Endothelial cell of umbilical vein (primary cell): ENCODE measurements at regions of chr14 and their contacts with region 1.

Region 1: GRCh38 chr14:67285876-67286452 is 44.7 kb downstream of the PALS1 start:
- DNase-seq: peak; percentile 39
- H3K4me3 ChIP-seq: no peak overlapping the region
- H3K27ac ChIP-seq: no peak overlapping the region
- H3K4me1 ChIP-seq: no peaks in the 10 kb centered on the region
- H3K27me3 ChIP-seq: no peaks in the 10 kb centered on the region
- CTCF ChIP-seq: peak; percentile 4 to 7
- POLR2A ChIP-seq: no peak

Region 2: DNA sequence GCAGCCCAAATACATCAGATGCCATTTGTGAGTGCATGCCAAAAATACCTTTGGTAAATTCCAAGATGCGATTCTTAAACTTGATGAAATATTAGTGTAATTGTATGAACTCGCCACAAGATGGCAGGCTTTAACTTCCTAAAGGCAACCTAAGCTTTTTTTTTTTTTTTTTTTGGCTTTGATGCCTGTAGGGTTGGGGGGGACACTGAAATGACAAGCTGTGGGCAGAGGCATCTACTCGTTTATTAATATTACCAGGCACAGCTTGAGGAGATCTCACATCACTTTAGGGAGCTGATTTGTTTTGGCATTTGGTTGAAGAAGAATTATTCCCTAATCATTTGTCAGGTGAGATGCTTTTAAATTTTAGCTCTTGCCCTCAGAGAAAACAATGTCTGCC is 926.5 kb before region 1 on chr14:
- CTCF ChIA-PET with region 1: interaction called, 18 read pairs
- POLR2A ChIA-PET with region 1: no interaction called
- dilution Hi-C with region 1: no loop called
- intact Hi-C with region 1: no loop called
- DNase-seq: peak; percentile 48
- H3K4me3 ChIP-seq: no peak overlapping the region
- H3K27ac ChIP-seq: no peak overlapping the region
- H3K4me1 ChIP-seq: no peaks in the 10 kb centered on the region
- H3K27me3 ChIP-seq: peaks cover 0 to 16% of the 10 kb centered on the region in 2 experiments
- CTCF ChIP-seq: peak; percentile 32 to 37
- POLR2A ChIP-seq: no peak

Region 3: GRCh38 chr14:67158566-67158965 is 127.4 kb before region 1 on chr14:
- CTCF ChIA-PET with region 1: interaction called, 186 read pairs
- POLR2A ChIA-PET with region 1: no interaction called
- dilution Hi-C with region 1: no loop called
- intact Hi-C with region 1: no loop called
- DNase-seq: no peak
- H3K4me3 ChIP-seq: no peak overlapping the region
- H3K27ac ChIP-seq: no peak overlapping the region
- H3K4me1 ChIP-seq: no peaks in the 10 kb centered on the region
- H3K27me3 ChIP-seq: no peaks in the 10 kb centered on the region
- CTCF ChIP-seq: no peak
- POLR2A ChIP-seq: no peak

Region 4: GRCh38 chr14:67187210-67187609 is 98.8 kb before region 1 on chr14:
- CTCF ChIA-PET with region 1: interaction called, 10 read pairs
- POLR2A ChIA-PET with region 1: no interaction called
- dilution Hi-C with region 1: no loop called
- intact Hi-C with region 1: no loop called
- DNase-seq: peak; percentile 31
- H3K4me3 ChIP-seq: no peak overlapping the region
- H3K27ac ChIP-seq: no peak overlapping the region
- H3K4me1 ChIP-seq: peaks cover 10% of the 10 kb centered on the region
- H3K27me3 ChIP-seq: no peaks in the 10 kb centered on the region
- CTCF ChIP-seq: no peak
- POLR2A ChIP-seq: no peak

Region 5: DNA sequence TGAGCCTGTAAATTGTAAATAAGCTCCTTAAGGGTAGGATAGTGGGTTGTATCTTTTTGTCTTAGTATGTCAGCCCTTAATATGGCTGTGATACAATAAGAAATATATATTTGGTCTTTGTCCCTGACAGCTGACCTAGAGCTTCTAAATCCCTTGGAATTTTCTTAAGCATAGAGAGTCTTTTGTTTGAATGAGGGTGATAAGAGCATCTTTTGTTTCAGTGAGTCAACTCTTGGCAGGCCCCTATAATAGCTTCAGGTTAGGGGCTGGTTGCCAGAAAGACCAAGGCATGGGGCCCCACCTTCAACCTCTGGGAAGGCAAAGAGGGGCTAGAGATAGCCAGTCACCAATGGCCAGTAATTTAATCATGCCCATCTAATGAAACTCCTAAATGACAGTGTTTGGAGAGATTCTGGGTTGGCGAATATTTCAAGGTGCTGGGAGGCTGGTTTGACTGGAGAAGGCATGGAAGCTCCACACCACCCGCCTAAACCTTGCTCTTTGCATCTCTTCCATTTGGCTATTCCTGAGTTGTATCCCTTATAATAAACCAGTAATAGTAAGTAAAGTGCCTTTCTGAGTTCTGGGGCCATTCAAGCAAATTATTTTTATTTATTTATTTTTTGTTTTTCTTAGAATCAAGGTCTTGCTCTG is 34.3 kb before region 1 on chr14:
- CTCF ChIA-PET with region 1: interaction called, 20 read pairs
- POLR2A ChIA-PET with region 1: interaction called, 3 read pairs
- dilution Hi-C with region 1: no loop called
- intact Hi-C with region 1: no loop called
- DNase-seq: no peak
- H3K4me3 ChIP-seq: no peak overlapping the region
- H3K27ac ChIP-seq: no peak overlapping the region
- H3K4me1 ChIP-seq: peaks cover 2% of the 10 kb centered on the region
- H3K27me3 ChIP-seq: no peaks in the 10 kb centered on the region
- CTCF ChIP-seq: no peak
- POLR2A ChIP-seq: no peak

Region 6: DNA sequence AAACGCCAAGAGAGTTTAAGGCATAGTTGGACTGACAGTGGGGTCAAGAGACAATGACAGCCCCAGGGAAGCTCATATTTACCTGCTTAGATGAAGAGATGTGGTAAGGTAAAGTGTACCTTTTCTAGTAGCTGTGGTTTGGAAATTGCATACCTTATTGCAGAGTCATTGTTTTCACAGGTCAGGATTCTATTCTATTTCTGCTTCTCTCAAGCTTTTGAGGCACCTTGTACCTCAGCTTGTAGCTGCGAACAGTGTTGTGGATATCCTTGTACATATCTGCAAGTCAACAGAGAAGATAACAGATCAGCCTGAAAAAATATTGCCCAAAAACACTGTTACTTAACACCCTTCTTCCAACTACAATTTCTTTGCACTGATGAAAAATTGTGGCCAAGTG is 25.9 kb after region 1 on chr14:
- CTCF ChIA-PET with region 1: interaction called, 22 read pairs
- POLR2A ChIA-PET with region 1: no interaction called
- dilution Hi-C with region 1: no loop called
- intact Hi-C with region 1: no loop called
- DNase-seq: no peak
- H3K4me3 ChIP-seq: no peak overlapping the region
- H3K27ac ChIP-seq: no peak overlapping the region
- H3K4me1 ChIP-seq: no peaks in the 10 kb centered on the region
- H3K27me3 ChIP-seq: no peaks in the 10 kb centered on the region
- CTCF ChIP-seq: no peak
- POLR2A ChIP-seq: no peak